GM10248 (cell line): ENCODE measurements at regions of chr4 and their contacts with region 1.

Region 1: DNA sequence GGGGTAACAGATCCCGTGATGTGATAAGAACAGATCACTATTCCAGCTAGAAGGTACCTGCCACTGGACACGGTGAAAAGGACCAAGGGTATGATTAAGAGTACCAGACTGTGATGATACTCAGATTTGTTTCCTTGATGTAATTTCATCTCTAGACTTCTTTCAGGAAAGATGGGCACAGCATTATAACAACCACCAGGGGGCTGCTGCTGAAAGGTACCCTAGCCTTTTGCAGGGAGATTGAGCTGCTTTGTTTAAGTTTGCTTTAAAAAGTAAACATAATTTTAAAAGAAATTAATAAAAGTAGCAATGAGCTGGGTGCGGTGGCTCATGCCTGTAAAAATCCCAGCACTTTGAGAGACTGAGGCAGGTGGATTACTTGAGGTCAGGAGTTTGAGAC is 145.4 kb downstream of the EMCN start:
- DNase-seq: no peak
- CTCF ChIP-seq: no peak

Region 2: DNA sequence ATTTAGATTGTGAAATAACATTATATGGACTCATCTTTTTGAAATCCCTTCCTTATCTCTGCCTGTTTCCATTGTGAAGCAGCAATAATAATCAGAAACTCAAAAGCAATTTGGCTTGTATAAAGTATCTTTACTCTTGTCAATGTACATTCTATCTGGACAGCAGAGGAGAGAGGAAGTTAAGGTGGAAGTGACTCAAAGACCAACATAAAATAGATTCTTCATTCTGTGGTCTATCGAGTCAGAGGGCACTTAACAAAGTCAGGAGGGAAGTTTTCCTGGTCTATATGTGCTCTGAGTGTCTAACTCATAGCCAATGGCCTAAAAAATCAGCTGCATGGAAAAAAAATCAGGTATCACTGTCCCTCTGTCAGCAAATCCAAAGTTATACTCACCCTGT is 10.1 kb before region 1 on chr4:
- CTCF ChIA-PET with region 1: interaction called, 11 read pairs
- POLR2A ChIA-PET with region 1: no interaction called
- DNase-seq: no peak
- CTCF ChIP-seq: no peak